MCF 10A (cell line): ENCODE measurements at regions of chr1 and their contacts with region 1.

Region 1: DNA sequence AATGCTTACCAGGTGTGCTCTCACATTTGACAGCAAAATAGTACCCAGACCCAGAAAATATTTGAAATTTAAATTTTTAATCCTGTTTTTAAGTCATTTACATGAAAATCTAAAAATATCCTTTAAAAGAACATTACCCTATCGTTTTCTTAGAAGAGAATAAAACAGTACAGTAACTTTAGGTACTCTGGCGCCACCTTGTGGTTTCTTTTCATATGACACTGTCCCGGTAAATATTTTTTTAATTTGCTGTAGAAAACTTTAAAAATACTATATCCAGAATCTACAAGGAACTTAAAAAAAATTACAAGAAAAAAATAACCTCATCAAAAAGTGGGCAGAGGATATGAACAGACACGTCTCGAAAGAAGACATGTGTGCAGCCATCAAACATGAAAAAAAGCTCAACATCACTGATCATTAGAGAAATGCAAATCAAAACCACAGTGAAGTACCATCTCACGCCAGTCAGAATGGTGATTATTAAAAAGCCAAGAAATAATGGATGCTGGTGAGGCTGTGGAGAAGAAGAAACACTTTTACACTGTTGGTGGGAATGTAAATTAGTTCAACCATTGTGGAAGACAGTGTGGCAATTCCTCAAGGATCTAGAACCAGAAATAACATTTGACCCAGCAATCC is 129.2 kb downstream of the RGS21 start:
- DNase-seq: peak; percentile 68
- H3K4me3 Mint-ChIP-seq: no peak overlapping the region
- H3K27ac Mint-ChIP-seq: no peak overlapping the region
- H3K4me1 Mint-ChIP-seq: peaks cover 13% of the 10 kb centered on the region
- H3K27me3 Mint-ChIP-seq: no peaks in the 10 kb centered on the region
- CTCF ChIP-seq: peak; percentile 80

Region 2: GRCh38 chr1:190453550-190453949 is 1992.4 kb before region 1 on chr1:
- CTCF ChIA-PET with region 1: no interaction called
- POLR2A ChIA-PET with region 1: no interaction called
- intact Hi-C with region 1: loop called (anchors 10 kb)
- DNase-seq: peak; percentile 24
- H3K4me3 Mint-ChIP-seq: no peak overlapping the region
- H3K27ac Mint-ChIP-seq: no peak overlapping the region
- H3K4me1 Mint-ChIP-seq: no peaks in the 10 kb centered on the region
- H3K27me3 Mint-ChIP-seq: no peaks in the 10 kb centered on the region
- CTCF ChIP-seq: peak; percentile 32

Region 3: GRCh38 chr1:190633488-190633887 is 1812.5 kb before region 1 on chr1:
- CTCF ChIA-PET with region 1: interaction called, 3 read pairs
- POLR2A ChIA-PET with region 1: no interaction called
- intact Hi-C with region 1: loop called (anchors 5 kb)
- DNase-seq: no peak
- H3K4me3 Mint-ChIP-seq: no peak overlapping the region
- H3K27ac Mint-ChIP-seq: no peak overlapping the region
- H3K4me1 Mint-ChIP-seq: no peaks in the 10 kb centered on the region
- H3K27me3 Mint-ChIP-seq: no peaks in the 10 kb centered on the region
- CTCF ChIP-seq: peak; percentile 28

Region 4: GRCh38 chr1:190754666-190755065 is 1691.3 kb before region 1 on chr1:
- CTCF ChIA-PET with region 1: no interaction called
- POLR2A ChIA-PET with region 1: no interaction called
- intact Hi-C with region 1: loop called (anchors 10 kb)
- DNase-seq: peak; percentile 76
- H3K4me3 Mint-ChIP-seq: no peak overlapping the region
- H3K27ac Mint-ChIP-seq: no peak overlapping the region
- H3K4me1 Mint-ChIP-seq: peaks cover 7% of the 10 kb centered on the region
- H3K27me3 Mint-ChIP-seq: no peaks in the 10 kb centered on the region
- CTCF ChIP-seq: peak; percentile 41

Region 5: GRCh38 chr1:191993549-191993948 is 452.4 kb before region 1 on chr1:
- CTCF ChIA-PET with region 1: interaction called, 3 read pairs
- POLR2A ChIA-PET with region 1: no interaction called
- intact Hi-C with region 1: loop called (anchors 1 kb)
- DNase-seq: peak; percentile 34
- H3K4me3 Mint-ChIP-seq: no peak overlapping the region
- H3K27ac Mint-ChIP-seq: no peak overlapping the region
- H3K4me1 Mint-ChIP-seq: no peaks in the 10 kb centered on the region
- H3K27me3 Mint-ChIP-seq: no peaks in the 10 kb centered on the region
- CTCF ChIP-seq: peak; percentile 31

Region 6: GRCh38 chr1:192311281-192311680 is 134.7 kb before region 1 on chr1:
- CTCF ChIA-PET with region 1: no interaction called
- POLR2A ChIA-PET with region 1: no interaction called
- intact Hi-C with region 1: loop called (anchors 1 kb)
- DNase-seq: peak; percentile 65
- H3K4me3 Mint-ChIP-seq: no peak overlapping the region
- H3K27ac Mint-ChIP-seq: no peak overlapping the region
- H3K4me1 Mint-ChIP-seq: no peaks in the 10 kb centered on the region
- H3K27me3 Mint-ChIP-seq: no peaks in the 10 kb centered on the region
- CTCF ChIP-seq: peak; percentile 73

Region 7: GRCh38 chr1:192462616-192463015 is 16.6 kb after region 1 on chr1:
- CTCF ChIA-PET with region 1: interaction called, 10 read pairs
- POLR2A ChIA-PET with region 1: no interaction called
- intact Hi-C with region 1: no loop called
- DNase-seq: no peak
- H3K4me3 Mint-ChIP-seq: no peak overlapping the region
- H3K27ac Mint-ChIP-seq: no peak overlapping the region
- H3K4me1 Mint-ChIP-seq: no peaks in the 10 kb centered on the region
- H3K27me3 Mint-ChIP-seq: no peaks in the 10 kb centered on the region
- CTCF ChIP-seq: no peak

Region 8: DNA sequence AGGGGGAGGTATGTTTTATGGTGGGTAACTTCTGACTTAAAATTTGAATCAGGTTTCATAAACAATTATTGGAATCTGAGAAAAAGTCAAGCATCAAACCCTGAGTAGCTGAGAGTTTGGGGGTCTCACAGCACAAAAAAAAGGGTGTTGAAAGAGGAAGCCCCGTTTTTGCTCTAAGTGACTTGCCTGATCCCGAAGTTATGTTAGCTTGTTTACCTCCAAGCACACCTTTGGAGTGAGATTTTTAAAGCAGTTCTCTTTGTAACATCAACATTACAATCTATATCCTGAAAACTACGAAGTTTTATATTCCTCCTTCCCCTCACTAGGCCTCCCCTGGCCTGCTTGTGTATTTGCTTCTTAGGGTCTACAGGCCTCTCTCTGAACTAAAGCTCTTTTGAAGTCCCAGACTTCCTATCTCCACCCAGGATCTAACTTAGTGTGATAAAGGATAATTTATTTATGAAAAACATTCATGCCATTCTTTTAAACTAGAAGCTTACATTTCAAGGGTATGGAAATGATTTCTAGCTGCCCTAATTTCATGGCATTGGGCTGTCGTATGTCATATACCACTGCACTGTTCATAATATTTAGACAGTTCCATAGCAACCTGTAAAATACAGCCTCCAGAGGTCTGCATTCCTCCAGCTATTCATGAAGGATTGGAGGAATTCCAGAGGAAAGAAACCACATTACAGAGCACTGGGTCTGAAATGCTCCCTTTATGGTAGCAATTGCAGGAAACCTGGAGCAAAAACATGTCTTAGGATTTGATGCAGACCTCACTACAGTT is 93.5 kb after region 1 on chr1:
- CTCF ChIA-PET with region 1: no interaction called
- POLR2A ChIA-PET with region 1: no interaction called
- intact Hi-C with region 1: no loop called
- DNase-seq: peak; percentile 41
- H3K4me3 Mint-ChIP-seq: no peak overlapping the region
- H3K27ac Mint-ChIP-seq: peak overlapping the region; percentile 84
- H3K4me1 Mint-ChIP-seq: no peaks in the 10 kb centered on the region
- H3K27me3 Mint-ChIP-seq: no peaks in the 10 kb centered on the region
- CTCF ChIP-seq: no peak